HEK293T (cell line): ENCODE measurements at regions of chr5 and their contacts with region 1.

Region 1: DNA sequence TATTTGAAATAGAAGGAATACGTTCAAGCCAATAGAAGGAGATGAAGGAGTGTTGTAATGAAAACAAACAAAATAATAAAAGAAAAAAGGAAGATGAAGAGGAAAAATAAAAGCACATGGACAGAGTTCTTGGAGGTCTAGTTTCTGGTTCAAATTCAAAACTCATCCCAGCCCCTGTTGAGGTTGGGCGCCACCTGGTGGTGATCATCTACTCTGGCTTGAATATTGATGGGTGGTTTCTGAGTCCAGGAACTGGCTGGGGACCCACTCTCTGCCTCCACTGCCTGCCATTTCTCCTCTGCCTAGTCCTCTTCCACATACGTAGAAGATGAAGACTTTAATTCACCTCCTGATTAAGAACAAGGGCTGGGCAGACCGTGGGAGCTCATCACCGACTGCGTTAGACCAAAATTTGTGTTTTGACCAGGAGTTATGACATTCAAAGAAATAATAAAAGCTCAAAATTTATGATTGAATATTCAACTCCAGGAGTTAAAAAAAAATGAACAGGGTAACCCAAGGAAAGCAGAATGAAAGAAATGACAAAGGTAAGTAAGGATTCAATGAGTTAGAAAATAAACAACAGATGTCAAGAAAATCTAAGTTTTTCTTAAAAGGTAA is 99.0 kb upstream of the SLC1A3 start:
- DNase-seq: peak; percentile 80

Region 2: GRCh38 chr5:36177715-36178523 is 329.5 kb before region 1 on chr5:
- CTCF ChIA-PET with region 1: interaction called, 12 read pairs
- POLR2A ChIA-PET with region 1: no interaction called
- DNase-seq: peak; percentile 30

Region 3: GRCh38 chr5:36602711-36603321 is 95.4 kb after region 1 on chr5:
- CTCF ChIA-PET with region 1: no interaction called
- POLR2A ChIA-PET with region 1: no interaction called
- DNase-seq: peak; percentile 28

Region 4: DNA sequence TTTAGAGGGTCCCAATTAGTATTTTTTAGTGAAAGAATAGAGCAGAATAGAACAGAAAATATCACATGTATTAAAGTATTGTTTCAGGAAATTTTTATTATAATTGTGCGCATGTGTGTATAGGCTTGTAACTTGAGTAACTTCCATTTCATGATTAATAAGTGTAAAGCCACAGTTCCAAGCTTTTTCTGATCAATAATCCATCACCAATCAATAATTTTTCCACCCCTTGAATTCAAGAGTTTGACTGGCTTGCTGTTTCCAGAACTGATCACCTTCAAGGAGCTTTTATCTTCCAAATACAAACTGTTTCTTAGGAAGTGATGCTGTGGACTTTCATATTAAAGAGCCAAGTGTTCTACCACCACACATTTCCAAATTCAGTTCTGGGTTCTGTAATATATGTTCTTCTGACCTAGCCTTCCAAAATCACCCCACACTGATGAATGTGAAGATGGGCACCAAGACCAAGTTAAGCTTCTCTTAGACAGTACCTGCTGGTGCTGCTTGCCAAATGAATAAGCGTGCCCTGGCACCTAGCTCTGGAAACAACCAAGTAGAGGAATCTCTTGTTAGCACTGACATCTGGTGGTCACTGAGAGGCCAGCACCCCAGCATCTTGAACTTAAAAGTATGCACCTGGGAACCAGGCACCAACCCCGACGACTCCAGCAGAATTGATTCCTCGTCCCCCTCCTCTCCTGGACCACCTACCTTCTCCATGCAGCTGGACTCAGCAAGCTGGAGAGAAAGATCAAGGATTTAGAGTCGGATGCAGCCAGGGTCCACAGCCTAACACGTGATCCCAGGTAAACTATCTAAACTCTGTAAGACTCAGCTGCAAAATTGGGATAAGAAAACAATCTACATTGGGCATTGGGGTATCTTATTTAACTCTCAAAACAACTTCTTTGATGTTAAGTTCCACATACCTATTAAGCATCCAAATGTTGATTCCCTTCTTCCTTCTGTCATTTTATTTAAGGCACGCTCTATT is 188.5 kb after region 1 on chr5:
- CTCF ChIA-PET with region 1: interaction called, 11 read pairs
- POLR2A ChIA-PET with region 1: no interaction called
- DNase-seq: peak; percentile 65